Naive thymus-derived CD4-positive, alpha-beta T cell (primary cell): ENCODE measurements at regions of chr5 and their contacts with region 1.

Region 1: DNA sequence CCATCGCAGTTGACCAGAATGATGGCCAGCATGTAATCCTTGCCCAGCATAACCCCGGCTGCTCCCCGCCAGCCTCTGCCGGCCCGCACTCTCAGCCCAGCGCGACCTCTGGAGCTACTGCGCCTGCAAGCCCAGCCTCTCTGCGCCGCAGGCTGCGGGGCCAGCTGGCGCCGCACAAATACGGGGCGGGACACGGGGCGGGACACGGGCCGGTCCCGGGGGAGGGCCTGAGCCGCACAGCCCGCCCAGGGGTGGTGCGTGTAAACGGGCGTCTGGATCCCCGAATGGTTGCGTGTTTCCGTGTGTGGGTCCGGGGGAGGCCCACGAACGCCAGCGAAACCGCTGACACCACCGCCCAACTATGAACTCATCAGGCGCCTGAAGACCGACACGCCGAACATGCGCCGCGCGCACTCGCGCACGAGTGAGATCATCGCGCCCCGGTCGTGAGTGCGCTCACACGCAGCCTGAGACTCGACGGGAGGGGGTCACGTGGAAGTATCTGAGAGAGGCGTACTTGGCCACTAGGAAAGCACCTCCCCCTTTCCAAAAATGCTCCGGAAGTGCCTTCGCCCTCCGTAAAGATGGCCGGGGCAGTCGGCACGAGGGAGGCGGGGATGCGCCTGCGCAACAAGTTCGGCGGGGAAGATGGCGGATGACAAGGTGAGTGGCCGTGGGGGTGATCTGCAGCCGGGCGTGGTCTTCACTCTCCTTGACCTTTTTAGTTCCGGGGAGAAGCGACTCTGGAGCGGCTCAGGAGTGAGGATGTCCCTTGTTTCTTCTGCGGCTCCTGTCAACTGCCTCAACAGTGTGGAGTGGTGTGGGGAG is at the starts of genes APBB3 and SLC35A4:
- DNase-seq: peak; percentile 89 to 99 (median 98)
- ATAC-seq: peak; percentile 92
- H3K4me3 ChIP-seq: peak within 1 kb of the TSS; percentile 91
- H3K4me3 Mint-ChIP-seq: peak within 1 kb of the TSS; percentile 91 to 96 (median 94)
- H3K27ac ChIP-seq: peak within 1 kb of the TSS; percentile 94
- H3K27ac Mint-ChIP-seq: peak within 1 kb of the TSS; percentile 92 to 99 (median 96)
- H3K4me1 ChIP-seq: peaks cover 21 to 25% of the 10 kb centered on the region in 2 donors
- H3K4me1 Mint-ChIP-seq: peaks cover 27 to 75% (median 62%) of the 10 kb centered on the region in 7 donors
- H3K27me3 ChIP-seq: no peaks in the 10 kb centered on the region
- H3K27me3 Mint-ChIP-seq: no peaks in the 10 kb centered on the region
- total RNA-seq, gene APBB3: 37.9 to 77.8 (median 72.4) TPM
- total RNA-seq, gene SLC35A4: 40.4 to 90.1 (median 52.4) TPM

Region 2: DNA sequence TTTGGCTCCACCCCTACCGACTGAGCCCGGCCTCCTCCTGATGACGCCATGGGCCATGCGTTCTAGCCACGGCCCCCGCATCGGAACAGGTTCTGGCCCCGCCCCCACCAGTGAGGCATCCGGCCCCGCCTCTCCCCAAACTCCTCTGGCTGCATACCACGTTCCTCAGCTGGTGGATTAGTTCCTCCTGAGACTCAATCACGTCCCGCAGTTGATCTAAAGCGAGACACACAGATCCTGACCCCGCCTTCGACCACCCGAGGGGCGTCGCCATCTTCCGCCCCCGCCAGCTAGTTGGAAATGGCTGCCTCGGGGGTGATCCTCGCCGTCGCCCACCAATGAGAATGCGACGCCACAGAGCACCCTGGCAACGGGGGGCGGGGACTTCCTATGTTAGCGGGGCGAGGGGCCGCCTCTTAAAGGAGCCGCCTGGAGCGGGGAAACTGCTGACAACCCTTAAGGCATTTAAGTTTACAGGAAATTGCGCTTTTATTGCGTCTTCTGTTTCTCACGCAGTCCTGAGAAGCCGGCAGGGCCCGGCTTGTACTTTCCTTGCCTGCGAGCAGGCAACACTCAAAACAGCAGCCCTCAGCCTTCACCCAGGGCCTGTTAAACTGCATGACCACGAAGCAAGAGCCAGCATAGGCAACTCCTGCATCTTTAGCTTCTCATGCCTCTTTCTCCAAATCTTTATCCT is 1160.5 kb before region 1 on chr5 and contains the start of gene SPATA24:
- CTCF ChIA-PET with region 1: no interaction called
- POLR2A ChIA-PET with region 1: no interaction called
- intact Hi-C with region 1: loop called in 1 of 2 experiments (anchors 2 kb)
- DNase-seq: peak; percentile 90 to 99 (median 98)
- ATAC-seq: peak; percentile 94
- H3K4me3 ChIP-seq: peak within 1 kb of the TSS; percentile 56
- H3K4me3 Mint-ChIP-seq: peak within 1 kb of the TSS; percentile 88 to 98 (median 94)
- H3K27ac ChIP-seq: peak within 1 kb of the TSS; percentile 88
- H3K27ac Mint-ChIP-seq: peak within 1 kb of the TSS; percentile 96 to 100 (median 99)
- H3K4me1 ChIP-seq: peaks cover 16 to 18% of the 10 kb centered on the region in 2 donors
- H3K4me1 Mint-ChIP-seq: peaks cover 26 to 42% (median 36%) of the 10 kb centered on the region in 7 donors
- H3K27me3 ChIP-seq: no peaks in the 10 kb centered on the region
- H3K27me3 Mint-ChIP-seq: no peaks in the 10 kb centered on the region
- total RNA-seq, gene SPATA24: 4.4 to 7.6 (median 5.8) TPM

Region 3: DNA sequence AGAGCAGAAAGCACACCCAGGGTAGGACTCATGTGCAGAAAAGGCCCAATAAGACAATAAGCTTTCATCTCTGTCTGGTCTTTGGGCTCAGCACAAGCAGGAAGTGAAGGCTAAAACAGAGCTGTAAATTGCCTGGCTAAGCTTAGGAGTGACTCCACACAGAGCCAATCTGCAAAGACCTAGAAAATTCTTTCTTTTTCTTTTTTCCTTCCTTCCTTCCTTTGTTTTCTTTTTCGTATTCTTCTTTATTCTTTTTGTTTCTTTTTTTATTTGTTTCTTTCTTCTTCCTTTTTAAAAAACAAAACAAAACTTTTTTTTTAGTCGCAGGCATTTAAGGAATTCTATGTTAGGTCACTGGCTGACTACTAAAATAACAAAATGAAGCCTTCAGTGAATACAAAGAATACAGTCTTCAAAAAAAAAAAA is 12.4 kb after region 1 on chr5:
- CTCF ChIA-PET with region 1: no interaction called
- POLR2A ChIA-PET with region 1: interaction called, 6 read pairs
- intact Hi-C with region 1: loop called in 1 of 2 experiments (anchors 1 kb)
- DNase-seq: peak in 3 of 9 donors; percentile 23 to 38 (median 28)
- ATAC-seq: peak; percentile 70
- H3K4me3 ChIP-seq: no peak overlapping the region
- H3K4me3 Mint-ChIP-seq: no peak overlapping the region
- H3K27ac ChIP-seq: no peak overlapping the region
- H3K27ac Mint-ChIP-seq: peak overlapping the region in 6 of 9 donors; percentile 2 to 78 (median 63)
- H3K4me1 ChIP-seq: no peaks in the 10 kb centered on the region
- H3K4me1 Mint-ChIP-seq: peaks cover 3 to 15% (median 14%) of the 10 kb centered on the region in 7 donors
- H3K27me3 ChIP-seq: no peaks in the 10 kb centered on the region
- H3K27me3 Mint-ChIP-seq: peaks cover 0 to 14% (median 6%) of the 10 kb centered on the region in 5 donors

Region 4: GRCh38 chr5:140664359-140665119 is 100.1 kb after region 1 on chr5 and contains the start of gene WDR55:
- CTCF ChIA-PET with region 1: no interaction called
- POLR2A ChIA-PET with region 1: interaction called, 7 read pairs
- intact Hi-C with region 1: loop called (anchors 1 kb)
- DNase-seq: peak; percentile 91 to 98 (median 94)
- ATAC-seq: peak; percentile 97
- H3K4me3 ChIP-seq: peak within 1 kb of the TSS; percentile 95
- H3K4me3 Mint-ChIP-seq: peak within 1 kb of the TSS; percentile 96 to 100 (median 98)
- H3K27ac ChIP-seq: peak within 1 kb of the TSS; percentile 97
- H3K27ac Mint-ChIP-seq: peak within 1 kb of the TSS; percentile 93 to 100 (median 98)
- H3K4me1 ChIP-seq: peaks cover 0 to 8% of the 10 kb centered on the region in 2 donors
- H3K4me1 Mint-ChIP-seq: peaks cover 17 to 48% (median 38%) of the 10 kb centered on the region in 7 donors
- H3K27me3 ChIP-seq: no peaks in the 10 kb centered on the region
- H3K27me3 Mint-ChIP-seq: no peaks in the 10 kb centered on the region
- total RNA-seq, gene WDR55: 28.5 to 47.6 (median 37.8) TPM

Region 5: DNA sequence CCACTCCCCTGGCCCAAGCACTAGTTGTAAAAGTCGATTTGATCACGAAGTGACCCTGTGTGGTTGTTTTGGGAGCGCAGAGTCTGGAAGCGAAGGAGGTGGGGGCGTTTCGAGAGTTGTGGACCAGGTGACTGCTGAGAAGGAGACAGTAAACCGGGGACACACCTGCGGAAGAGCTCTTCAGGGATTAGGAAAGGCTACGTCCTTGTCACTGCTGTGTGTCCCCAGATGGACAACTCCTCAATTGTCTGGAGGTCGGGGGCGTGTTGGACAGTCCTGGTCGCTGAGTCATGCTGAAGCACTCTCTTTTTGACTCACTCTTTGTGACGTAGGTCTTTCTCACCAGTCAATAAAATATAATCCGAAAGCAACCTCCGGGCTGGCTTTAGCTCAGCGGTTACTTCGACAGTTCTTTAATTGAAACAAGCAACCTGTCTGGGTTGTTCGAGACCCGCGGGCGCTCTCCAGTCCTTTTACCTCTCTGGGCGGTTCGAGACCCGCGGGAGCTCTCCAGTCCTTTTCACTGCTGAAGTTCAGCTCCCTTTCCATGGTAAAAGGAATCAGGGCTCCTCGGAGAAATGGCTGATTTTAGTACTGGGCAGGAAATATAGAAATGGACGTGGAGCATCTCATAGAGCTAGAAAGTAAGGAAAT is 146.6 kb after region 1 on chr5:
- CTCF ChIA-PET with region 1: no interaction called
- POLR2A ChIA-PET with region 1: no interaction called
- intact Hi-C with region 1: loop called in 1 of 2 experiments (anchors 1 kb)
- DNase-seq: peak; percentile 57 to 94 (median 87)
- ATAC-seq: peak; percentile 89
- H3K4me3 ChIP-seq: peak overlapping the region; percentile 96
- H3K4me3 Mint-ChIP-seq: peak overlapping the region; percentile 95 to 100 (median 99)
- H3K27ac ChIP-seq: peak overlapping the region; percentile 72
- H3K27ac Mint-ChIP-seq: peak overlapping the region; percentile 98 to 100 (median 99)
- H3K4me1 ChIP-seq: peaks cover 0 to 5% of the 10 kb centered on the region in 2 donors
- H3K4me1 Mint-ChIP-seq: peaks cover 6 to 35% (median 25%) of the 10 kb centered on the region in 7 donors
- H3K27me3 ChIP-seq: no peaks in the 10 kb centered on the region
- H3K27me3 Mint-ChIP-seq: peaks cover 0 to 11% (median 0%) of the 10 kb centered on the region in 5 donors

Region 6: GRCh38 chr5:140767444-140767843 is 203.0 kb after region 1 on chr5:
- CTCF ChIA-PET with region 1: no interaction called
- POLR2A ChIA-PET with region 1: no interaction called
- intact Hi-C with region 1: no loop called
- DNase-seq: no peak
- ATAC-seq: no peak
- H3K4me3 ChIP-seq: no peak overlapping the region
- H3K4me3 Mint-ChIP-seq: no peak overlapping the region
- H3K27ac ChIP-seq: no peak overlapping the region
- H3K27ac Mint-ChIP-seq: no peak overlapping the region
- H3K4me1 ChIP-seq: no peaks in the 10 kb centered on the region
- H3K4me1 Mint-ChIP-seq: no peaks in the 10 kb centered on the region
- H3K27me3 ChIP-seq: no peaks in the 10 kb centered on the region
- H3K27me3 Mint-ChIP-seq: no peaks in the 10 kb centered on the region